Panc1 (cell line): ENCODE measurements at regions of chr2 and their contacts with region 1.

Region 1: GRCh38 chr2:154623819-154624218 is 74.7 kb upstream of the KCNJ3 start:
- DNase-seq: peak; percentile 20
- ATAC-seq: peak; percentile 48; the same call in 1 of the 2 replicates
- H3K4me3 ChIP-seq: no peak overlapping the region
- H3K27ac ChIP-seq: no peak overlapping the region
- H3K4me1 ChIP-seq: no peaks in the 10 kb centered on the region
- H3K27me3 ChIP-seq: no peaks in the 10 kb centered on the region
- CTCF ChIP-seq: peak; percentile 71

Region 2: DNA sequence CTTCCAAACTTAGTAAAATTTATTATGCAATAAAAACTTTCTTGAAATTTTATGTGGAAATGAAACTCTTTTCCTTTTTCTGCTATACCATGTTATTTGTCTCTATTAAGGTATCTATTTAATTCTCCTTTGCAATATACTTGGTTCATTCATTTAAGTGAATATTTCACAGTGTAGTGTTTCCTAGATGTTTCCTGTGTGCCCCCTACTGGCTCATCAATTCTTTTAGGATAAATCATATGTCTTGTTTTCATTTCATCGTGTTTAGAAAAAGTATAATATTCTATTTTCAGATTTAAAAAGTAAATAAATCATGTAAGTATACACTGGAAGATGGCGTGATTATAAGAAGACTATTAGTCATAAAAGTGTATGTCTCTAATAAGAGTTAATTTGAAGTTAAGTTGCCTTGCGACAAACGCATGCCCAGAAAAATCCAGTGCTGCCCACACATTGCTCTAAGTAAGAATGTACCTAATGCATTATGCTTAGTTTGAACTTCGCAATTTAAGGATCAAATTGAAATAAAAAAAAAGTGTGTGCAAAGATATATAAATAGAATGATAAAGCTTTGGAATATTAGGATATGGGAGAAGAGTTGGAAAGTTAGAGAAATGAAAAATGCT is 600.1 kb after region 1 on chr2:
- CTCF ChIA-PET with region 1: no interaction called
- POLR2A ChIA-PET with region 1: no interaction called
- in situ Hi-C with region 1: no loop called
- intact Hi-C with region 1: loop called (anchors 5 kb)
- DNase-seq: peak; percentile 1
- ATAC-seq: no peak
- H3K4me3 ChIP-seq: no peak overlapping the region
- H3K27ac ChIP-seq: no peak overlapping the region
- H3K4me1 ChIP-seq: no peaks in the 10 kb centered on the region
- H3K27me3 ChIP-seq: no peaks in the 10 kb centered on the region
- CTCF ChIP-seq: peak; percentile 36; the same call in 1 of the 2 replicates

Region 3: GRCh38 chr2:155310589-155310988 is 686.8 kb after region 1 on chr2:
- CTCF ChIA-PET with region 1: no interaction called
- POLR2A ChIA-PET with region 1: no interaction called
- in situ Hi-C with region 1: no loop called
- intact Hi-C with region 1: loop called (anchors 5 kb)
- DNase-seq: peak; percentile 10
- ATAC-seq: peak; percentile 70; the same call in 1 of the 2 replicates
- H3K4me3 ChIP-seq: no peak overlapping the region
- H3K27ac ChIP-seq: no peak overlapping the region
- H3K4me1 ChIP-seq: no peaks in the 10 kb centered on the region
- H3K27me3 ChIP-seq: no peaks in the 10 kb centered on the region
- CTCF ChIP-seq: peak; percentile 57; the same call in 1 of the 2 replicates